ENCODE measurements at regions of chr2 and their contacts with region 1.

Region 1: DNA sequence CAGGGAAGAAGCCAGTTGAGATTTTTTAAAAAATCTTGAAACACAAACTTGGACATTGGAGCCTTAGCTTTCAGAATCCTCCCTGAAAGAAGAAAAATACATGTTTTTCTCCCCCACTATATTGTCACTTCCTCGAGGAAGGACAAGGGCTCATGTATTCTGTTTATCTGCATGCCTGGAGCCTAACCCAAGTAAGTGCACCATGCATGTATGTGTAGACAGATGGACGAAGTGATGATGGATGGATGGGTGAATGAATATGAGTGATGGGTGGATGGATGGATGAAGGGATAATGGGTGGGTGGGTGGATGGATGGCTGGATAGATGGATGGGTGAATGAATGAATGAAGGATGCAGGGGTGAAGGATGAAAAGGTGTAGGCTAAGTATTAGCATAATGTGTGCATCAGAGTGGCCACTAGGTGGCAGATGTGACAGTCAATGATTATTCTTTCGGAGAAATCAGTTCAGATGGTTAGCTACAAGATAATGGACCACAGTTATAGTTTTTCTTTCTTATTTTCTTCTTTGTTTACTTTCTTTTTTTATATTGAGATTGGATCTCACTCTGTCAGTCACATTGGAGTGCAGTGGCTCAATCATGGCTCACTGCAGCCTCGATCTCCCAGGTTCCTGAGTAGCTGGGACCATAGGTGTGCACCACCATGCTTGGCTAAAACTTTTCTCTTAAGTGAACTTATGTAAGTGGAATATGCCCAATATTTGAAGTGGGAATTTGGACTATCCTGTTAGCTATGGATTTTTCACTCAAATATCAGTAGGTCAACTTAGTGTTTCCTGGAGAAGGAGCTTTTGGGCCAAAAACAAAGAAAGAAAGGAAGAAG is 18.5 kb upstream of the CCDC93 start:
- DNase-seq: peak; percentile 69
- H3K4me3 ChIP-seq: no peak overlapping the region
- H3K27ac ChIP-seq: no peak overlapping the region
- H3K4me1 ChIP-seq: peaks cover 18% of the 10 kb centered on the region
- CTCF ChIP-seq: peak; percentile 94

Region 2: DNA sequence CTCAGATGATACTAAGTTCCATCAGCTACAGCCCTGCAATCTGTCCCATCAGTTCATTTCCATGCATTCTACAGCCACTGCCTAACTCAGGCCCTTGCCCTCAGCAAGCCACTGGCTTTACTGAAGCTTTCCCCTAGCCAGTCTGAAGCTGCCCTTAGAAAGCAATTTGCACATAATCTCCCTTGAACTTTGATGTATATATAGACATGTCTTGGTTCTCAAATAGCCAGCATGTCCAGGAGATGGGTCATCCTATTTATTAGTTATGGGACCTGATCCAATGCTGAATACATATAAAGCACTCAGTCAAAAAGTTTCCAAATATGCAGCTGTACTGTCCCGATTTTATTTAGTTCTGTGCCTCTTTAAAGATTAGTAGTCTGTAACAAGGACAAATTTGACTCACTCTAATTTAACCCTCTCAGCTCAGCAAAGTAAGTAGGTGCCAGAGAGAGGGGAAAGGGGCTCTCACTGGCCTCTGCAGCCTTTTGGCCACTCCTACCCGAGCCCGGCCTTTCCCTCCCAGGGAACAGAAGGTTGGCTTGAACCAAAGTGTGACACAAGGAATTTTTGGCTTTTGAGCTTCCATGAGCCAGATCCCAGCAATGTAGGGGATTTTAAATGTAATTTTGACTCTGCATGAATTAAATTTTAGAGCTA is 89.2 kb before region 1 on chr2:
- CTCF ChIA-PET with region 1: no interaction called
- POLR2A ChIA-PET with region 1: no interaction called
- intact Hi-C with region 1: no loop called
- DNase-seq: no peak
- H3K4me3 ChIP-seq: no peak overlapping the region
- H3K27ac ChIP-seq: no peak overlapping the region
- H3K4me1 ChIP-seq: peaks cover 4% of the 10 kb centered on the region
- CTCF ChIP-seq: no peak

Region 3: DNA sequence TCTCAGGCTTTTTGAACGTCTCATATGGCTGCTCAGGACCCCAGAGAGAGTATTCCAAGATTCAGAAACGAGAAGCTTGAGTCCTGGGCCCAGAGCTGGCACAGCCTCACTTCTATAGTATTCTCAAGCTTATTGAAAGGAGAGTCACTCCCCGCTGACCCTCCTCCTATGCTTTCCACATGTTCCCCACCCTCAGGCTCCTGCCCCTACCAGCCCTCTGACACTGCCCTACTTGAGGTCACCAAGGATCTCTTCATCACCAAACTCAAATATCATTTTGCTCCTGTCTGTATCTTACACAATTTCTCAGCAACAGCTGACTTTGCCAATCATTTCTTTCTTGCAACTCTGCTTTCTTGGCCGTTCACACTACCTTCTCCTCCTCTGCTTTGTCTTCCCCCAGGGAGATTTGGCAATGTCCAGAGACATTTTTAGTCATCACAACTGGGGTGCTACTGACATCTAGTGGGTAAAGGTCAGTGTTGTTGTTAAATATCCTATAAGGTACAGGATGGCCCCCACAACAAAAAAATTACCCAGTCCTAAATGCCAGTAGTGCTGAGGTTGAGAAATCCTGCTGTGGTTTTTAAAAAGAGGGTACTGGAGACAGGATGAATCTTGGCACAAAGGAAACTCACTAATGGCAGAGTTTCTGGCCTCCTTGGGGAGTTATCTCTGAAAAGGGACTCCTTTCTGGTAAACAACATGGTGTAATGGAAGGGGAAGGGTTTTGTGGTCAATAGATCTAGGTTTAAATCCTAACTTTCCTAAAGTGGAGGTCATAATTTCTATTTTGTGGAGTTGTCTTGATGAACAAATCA is 29.0 kb after region 1 on chr2:
- CTCF ChIA-PET with region 1: interaction called, 5 read pairs
- POLR2A ChIA-PET with region 1: interaction called, 3 read pairs
- intact Hi-C with region 1: loop called (anchors 1 kb)
- DNase-seq: peak; percentile 78
- H3K4me3 ChIP-seq: no peak overlapping the region
- H3K27ac ChIP-seq: no peak overlapping the region
- H3K4me1 ChIP-seq: peaks cover 47% of the 10 kb centered on the region
- CTCF ChIP-seq: peak; percentile 92

Region 4: GRCh38 chr2:118088051-118089024 is 55.9 kb after region 1 on chr2 and contains the start of gene INSIG2:
- CTCF ChIA-PET with region 1: no interaction called
- POLR2A ChIA-PET with region 1: interaction called, 13 read pairs
- intact Hi-C with region 1: no loop called
- DNase-seq: peak; percentile 94
- H3K4me3 ChIP-seq: peak within 1 kb of the TSS; percentile 92
- H3K27ac ChIP-seq: no peak within 1 kb of the TSS
- H3K4me1 ChIP-seq: peaks cover 16% of the 10 kb centered on the region
- CTCF ChIP-seq: no peak
- total RNA-seq, gene INSIG2: 3.4 and 5.9 TPM in 2 replicates